MCF 10A (cell line): ENCODE measurements at regions of chr20 and their contacts with region 1.

Region 1: DNA sequence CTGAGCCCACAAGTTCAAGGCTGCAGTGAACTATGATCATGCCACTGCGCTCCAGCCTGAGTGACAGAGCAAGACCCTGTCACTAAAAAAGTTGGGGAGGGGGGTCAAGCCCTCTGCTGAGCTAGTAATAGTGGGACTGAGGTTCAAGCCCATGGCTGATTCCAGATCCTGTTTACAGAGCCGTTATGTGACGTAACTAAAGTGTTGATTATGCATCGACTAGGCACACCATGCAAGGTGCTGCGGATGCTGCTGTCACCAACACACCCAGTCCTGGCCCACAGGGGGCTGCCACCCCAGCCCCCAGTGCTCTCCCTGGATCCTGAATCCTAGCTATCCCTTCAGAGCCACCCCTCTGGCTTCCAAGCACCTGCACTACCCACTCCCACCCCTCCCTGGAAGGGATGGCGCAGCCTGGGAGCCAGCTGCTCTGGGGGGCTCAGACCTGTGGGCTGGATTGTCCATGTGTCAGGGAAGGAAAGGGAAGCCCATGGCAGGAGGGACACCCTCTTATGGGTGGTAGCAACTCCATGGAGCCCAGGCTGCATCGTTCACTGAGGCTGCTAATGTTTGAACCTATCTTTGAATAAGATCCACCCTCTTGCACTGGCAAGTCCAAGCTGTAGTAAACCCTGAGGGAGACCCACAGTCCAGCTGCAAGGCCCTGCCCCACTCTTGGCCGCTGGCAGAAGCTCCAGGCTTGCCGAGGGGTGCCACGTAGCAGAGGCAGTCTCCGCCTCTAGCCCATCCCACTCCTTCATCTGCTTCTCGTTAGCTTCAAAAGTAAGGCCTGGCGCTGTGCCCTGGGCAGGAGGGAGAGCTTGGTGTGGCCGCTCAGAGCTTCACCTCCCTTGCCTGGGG is 95.0 kb downstream of the SNX5 start:
- DNase-seq: peak; percentile 91
- H3K4me3 Mint-ChIP-seq: peak overlapping the region; percentile 46
- H3K27ac Mint-ChIP-seq: peak overlapping the region; percentile 29
- H3K4me1 Mint-ChIP-seq: peaks cover 24% of the 10 kb centered on the region
- H3K27me3 Mint-ChIP-seq: no peaks in the 10 kb centered on the region
- CTCF ChIP-seq: no peak

Region 2: DNA sequence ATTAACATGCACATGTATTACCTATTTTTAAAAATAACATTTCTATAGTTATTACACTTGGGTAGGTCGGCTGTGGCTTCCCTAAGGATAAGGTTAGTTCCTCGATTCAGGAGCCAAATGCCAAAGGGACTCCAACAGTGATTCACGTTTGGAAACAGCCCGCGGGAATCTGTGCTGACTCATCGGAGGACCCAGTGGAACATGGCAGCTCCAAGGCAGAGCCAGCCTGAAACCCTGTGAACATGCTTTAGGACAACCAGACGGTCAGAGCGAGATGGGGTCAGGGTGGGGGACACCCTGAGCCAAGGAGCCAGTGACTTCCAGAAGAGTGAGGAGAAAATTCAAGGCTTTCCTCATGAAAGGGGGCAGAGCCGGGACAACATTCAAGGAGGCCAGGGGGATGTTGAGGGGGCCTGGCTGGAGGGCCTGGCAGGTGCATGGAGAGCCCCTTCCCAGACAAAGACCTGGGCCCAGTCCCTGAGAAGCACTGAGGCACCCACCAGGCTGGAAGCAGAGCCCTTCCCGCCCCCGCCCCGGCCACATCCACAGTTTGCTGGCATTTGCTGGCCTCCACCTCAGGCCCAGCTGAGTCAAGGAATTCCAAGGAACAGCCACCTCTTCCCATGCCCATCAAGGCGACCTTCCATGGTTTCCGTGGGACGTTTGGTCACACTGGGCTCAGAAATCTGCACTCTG is 38.3 kb before region 1 on chr20:
- CTCF ChIA-PET with region 1: no interaction called
- POLR2A ChIA-PET with region 1: interaction called, 12 read pairs
- intact Hi-C with region 1: no loop called
- DNase-seq: peak; percentile 96
- H3K4me3 Mint-ChIP-seq: peak overlapping the region; percentile 5
- H3K27ac Mint-ChIP-seq: peak overlapping the region; percentile 76
- H3K4me1 Mint-ChIP-seq: peaks cover 31% of the 10 kb centered on the region
- H3K27me3 Mint-ChIP-seq: no peaks in the 10 kb centered on the region
- CTCF ChIP-seq: no peak

Region 3: GRCh38 chr20:17843246-17844132 is 30.2 kb before region 1 on chr20:
- CTCF ChIA-PET with region 1: interaction called, 6 read pairs
- POLR2A ChIA-PET with region 1: interaction called, 20 read pairs
- intact Hi-C with region 1: no loop called
- DNase-seq: peak; percentile 95
- H3K4me3 Mint-ChIP-seq: peak overlapping the region; percentile 48
- H3K27ac Mint-ChIP-seq: peak overlapping the region; percentile 93
- H3K4me1 Mint-ChIP-seq: peaks cover 59% of the 10 kb centered on the region
- H3K27me3 Mint-ChIP-seq: no peaks in the 10 kb centered on the region
- CTCF ChIP-seq: no peak

Region 4: DNA sequence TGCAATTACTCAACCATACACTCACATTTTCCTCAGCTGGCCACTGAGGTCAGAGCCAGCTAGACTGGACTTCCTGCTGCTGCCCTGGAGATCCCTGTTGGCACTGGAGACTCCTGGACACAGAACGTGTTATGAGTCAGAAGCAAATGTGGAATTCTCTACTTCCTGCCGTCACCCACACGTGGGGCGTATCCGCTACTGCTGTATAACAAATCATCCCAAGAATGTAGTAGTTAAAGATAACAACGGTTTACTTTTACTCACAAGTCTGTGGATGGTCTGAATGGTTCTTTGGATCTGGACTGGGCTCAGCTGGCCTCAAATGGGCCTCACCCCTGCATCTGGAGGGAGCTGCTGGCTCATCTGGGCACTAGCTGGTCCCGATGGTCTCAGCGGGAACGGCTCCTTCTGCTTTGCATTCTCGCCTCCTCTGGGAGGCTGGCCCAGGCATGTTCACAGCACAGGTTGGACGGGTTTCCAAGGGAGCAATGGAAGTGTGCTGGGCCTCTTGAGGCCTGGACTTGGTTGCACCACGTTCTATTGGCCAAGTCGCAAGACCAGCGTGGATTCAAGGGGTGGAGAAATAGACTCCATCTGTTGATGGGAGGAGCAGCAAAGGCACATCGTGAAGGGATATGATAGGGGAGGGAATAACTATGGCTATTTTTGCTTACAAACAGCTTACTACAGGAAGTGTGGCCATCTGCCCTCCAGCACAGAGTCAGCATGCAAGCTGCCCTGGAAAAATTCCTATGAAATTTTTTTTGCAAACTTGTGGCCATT is 23.5 kb before region 1 on chr20:
- CTCF ChIA-PET with region 1: interaction called, 4 read pairs
- POLR2A ChIA-PET with region 1: interaction called, 20 read pairs
- intact Hi-C with region 1: no loop called
- DNase-seq: peak; percentile 95
- H3K4me3 Mint-ChIP-seq: peak overlapping the region; percentile 56
- H3K27ac Mint-ChIP-seq: peak overlapping the region; percentile 92
- H3K4me1 Mint-ChIP-seq: peaks cover 50% of the 10 kb centered on the region
- H3K27me3 Mint-ChIP-seq: no peaks in the 10 kb centered on the region
- CTCF ChIP-seq: no peak